IMR-90 (cell line): ENCODE measurements at regions of chr2 and their contacts with region 1.

Region 1: DNA sequence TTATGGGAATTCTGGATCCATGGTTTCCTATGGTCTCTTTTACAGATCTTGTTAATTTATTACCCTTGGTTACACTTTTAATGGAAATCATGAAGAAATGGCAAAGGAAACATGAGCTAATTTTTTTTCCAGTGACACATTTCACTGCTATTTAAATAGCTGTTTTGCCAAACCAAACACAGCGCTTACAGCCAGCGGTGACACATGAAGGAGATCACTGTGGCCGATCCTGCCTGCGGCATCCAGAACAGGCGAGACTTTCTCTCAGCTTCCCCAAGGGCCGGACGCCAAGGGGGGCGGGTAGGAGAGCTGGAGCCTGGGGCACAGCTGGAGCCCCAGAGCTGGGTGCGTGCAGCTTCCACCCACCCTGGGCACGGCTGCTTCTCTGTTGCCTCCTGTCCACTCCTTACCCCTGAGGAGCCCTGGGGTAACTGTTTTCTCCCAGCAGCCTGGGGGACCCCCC is 81.4 kb upstream of the PKDCC start:
- DNase-seq: peak; percentile 96
- ATAC-seq: peak; percentile 93
- H3K4me3 ChIP-seq: no peak overlapping the region
- H3K27ac ChIP-seq: peak overlapping the region; percentile 5; the same call in 1 of the 2 replicates
- H3K4me1 ChIP-seq: peaks cover 27% of the 10 kb centered on the region
- H3K27me3 ChIP-seq: peaks cover 27% of the 10 kb centered on the region
- CTCF ChIP-seq: no peak
- POLR2A ChIP-seq: no peak
- RAD21 ChIP-seq: peak; percentile 44

Region 2: DNA sequence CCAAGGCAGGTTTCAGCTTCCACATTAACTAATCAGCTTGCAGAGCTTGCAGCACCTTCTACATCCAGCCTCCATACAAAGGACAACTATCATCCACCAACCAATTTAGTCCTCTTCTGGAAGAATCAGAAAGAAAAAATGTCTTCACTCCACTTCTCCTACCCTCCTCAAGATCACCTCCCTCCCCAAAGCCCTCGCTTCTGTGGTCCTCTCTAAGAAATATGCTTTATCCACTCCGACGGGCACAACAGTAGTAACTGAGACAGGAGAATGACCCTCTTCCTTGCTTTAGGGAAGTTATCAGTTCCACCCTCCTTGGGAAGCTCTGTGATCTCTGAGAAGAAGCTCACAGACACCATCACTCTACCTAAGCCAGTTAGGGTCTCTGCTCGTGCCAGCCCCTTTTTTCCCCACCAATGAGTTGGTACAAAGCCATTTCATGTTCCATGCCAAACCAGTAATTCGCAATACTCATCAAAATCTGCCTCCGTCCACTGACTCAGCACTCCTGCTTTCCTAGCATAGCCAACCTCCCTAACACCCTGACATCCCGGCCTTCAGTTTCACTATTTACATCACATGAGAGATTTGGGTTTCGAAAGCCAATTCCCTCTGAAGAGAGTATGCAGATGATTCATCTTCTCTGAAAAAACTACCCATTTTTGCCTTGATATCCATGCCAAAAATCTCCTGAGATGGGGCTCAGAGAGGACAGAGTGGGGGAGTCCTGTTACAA is 32.7 kb before region 1 on chr2:
- CTCF ChIA-PET with region 1: no interaction called
- POLR2A ChIA-PET with region 1: no interaction called
- dilution Hi-C with region 1: no loop called
- in situ Hi-C with region 1: no loop called
- intact Hi-C with region 1: loop called (anchors 2 kb)
- DNase-seq: peak; percentile 96
- ATAC-seq: peak; percentile 70
- H3K4me3 ChIP-seq: no peak overlapping the region
- H3K27ac ChIP-seq: peak overlapping the region; percentile 79; the same call in 1 of the 2 replicates
- H3K4me1 ChIP-seq: peaks cover 39% of the 10 kb centered on the region
- H3K27me3 ChIP-seq: no peaks in the 10 kb centered on the region
- CTCF ChIP-seq: no peak
- POLR2A ChIP-seq: no peak
- RAD21 ChIP-seq: peak; percentile 7; the same call in 1 of the 2 replicates

Region 3: DNA sequence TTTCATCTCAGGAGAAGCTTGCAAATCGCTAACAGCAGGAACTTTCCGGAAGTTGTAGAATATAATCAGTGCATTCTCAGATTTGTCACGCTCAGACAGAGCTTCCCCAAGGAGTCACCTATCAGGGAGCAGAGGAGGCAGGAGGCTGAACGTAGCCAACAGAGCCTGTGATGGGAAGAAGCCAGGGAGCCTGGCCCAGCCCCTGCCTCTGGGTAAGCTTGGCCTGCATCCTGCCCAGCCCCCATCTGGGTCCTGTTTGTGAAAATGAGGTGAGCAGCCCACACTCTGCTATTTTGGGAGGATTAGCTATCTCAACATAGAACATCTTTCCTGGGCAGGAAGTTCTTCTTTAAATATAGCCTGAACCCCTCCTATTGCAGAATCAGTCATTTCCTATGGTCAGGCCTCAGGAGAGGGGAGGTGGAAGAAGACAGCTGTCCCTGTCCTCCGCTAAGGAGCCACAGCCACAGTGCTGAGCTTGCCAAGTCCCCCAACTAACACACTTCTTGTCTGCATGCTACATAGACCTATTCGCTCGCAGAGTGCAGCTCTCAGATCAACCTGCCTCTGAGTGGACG is 62.2 kb after region 1 on chr2:
- CTCF ChIA-PET with region 1: no interaction called
- POLR2A ChIA-PET with region 1: no interaction called
- dilution Hi-C with region 1: no loop called
- in situ Hi-C with region 1: no loop called
- intact Hi-C with region 1: no loop called
- DNase-seq: no peak
- ATAC-seq: no peak
- H3K4me3 ChIP-seq: no peak overlapping the region
- H3K27ac ChIP-seq: no peak overlapping the region
- H3K4me1 ChIP-seq: peaks cover 14% of the 10 kb centered on the region; the same call in 1 of the 2 replicates
- H3K27me3 ChIP-seq: peaks cover 5% of the 10 kb centered on the region
- CTCF ChIP-seq: no peak
- POLR2A ChIP-seq: no peak
- RAD21 ChIP-seq: no peak